Activated naive CD4-positive, alpha-beta T cell treated with anti-CD3 and anti-CD28 coated beads for 36 hours (primary cell): ENCODE measurements at regions of chr1 and their contacts with region 1.

Region 1: GRCh38 chr1:89632657-89633247 is at the start of gene LRRC8C:
- DNase-seq: peak; percentile 86
- H3K4me3 Mint-ChIP-seq: peak within 1 kb of the TSS; percentile 91
- H3K27ac Mint-ChIP-seq: peak within 1 kb of the TSS; percentile 93
- H3K4me1 Mint-ChIP-seq: peaks cover 65% of the 10 kb centered on the region
- H3K27me3 Mint-ChIP-seq: no peaks in the 10 kb centered on the region
- total RNA-seq, gene LRRC8C: 13.6 TPM

Region 2: DNA sequence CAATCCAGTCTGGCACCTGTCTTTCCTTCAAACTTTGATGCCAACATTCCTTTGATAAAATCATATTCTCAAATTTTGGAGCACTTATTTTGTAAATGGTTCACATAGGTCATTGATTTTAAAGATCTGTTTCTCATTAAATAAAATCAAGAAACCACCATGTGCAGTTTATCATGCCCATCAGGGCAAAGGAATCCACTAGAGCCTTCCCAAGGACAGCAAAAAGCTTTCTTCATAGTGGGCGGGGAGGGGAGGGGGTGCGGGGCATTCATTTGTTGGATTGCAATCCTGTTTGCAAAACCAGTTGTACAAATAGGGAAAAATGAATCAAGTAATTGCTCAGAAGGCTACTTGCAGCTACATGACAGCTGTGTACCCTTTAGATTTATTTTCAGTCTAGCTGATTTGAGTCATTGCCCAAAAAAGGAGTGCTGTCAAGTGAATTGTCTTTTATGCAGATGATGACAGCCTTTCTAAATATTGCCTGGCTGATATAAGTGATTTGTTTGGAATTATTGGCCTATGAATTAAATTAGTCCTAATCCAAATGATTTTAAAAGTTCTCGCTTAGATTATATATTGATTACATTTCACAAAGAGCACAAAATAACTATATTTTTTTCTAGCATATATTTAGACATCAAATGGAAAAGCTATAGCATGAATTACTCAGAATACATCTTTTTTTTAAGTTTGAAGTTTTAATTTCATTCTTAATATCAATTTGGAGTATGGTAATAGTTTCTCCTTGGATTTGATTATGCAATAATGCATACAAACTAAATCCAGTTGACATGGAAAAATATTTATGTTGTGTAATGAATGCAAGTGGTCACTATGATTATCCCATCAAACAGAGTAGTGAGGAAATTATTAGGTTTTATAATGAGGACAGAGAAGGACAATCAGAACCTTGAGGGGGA is 84.9 kb before region 1 on chr1:
- CTCF ChIA-PET with region 1: interaction called, 3 read pairs
- intact Hi-C with region 1: loop called (anchors 1 kb)
- DNase-seq: peak; percentile 56
- H3K4me3 Mint-ChIP-seq: no peak overlapping the region
- H3K27ac Mint-ChIP-seq: peak overlapping the region; percentile 95
- H3K4me1 Mint-ChIP-seq: peaks cover 84% of the 10 kb centered on the region
- H3K27me3 Mint-ChIP-seq: no peaks in the 10 kb centered on the region

Region 3: GRCh38 chr1:89649783-89650182 is 17.0 kb after region 1 on chr1:
- CTCF ChIA-PET with region 1: interaction called, 5 read pairs
- intact Hi-C with region 1: loop called (anchors 1 kb)
- DNase-seq: no peak
- H3K4me3 Mint-ChIP-seq: no peak overlapping the region
- H3K27ac Mint-ChIP-seq: peak overlapping the region; percentile 56
- H3K4me1 Mint-ChIP-seq: peaks cover 66% of the 10 kb centered on the region
- H3K27me3 Mint-ChIP-seq: no peaks in the 10 kb centered on the region

Region 4: GRCh38 chr1:89688607-89689006 is 55.9 kb after region 1 on chr1:
- CTCF ChIA-PET with region 1: no interaction called
- intact Hi-C with region 1: loop called (anchors 1 kb)
- DNase-seq: no peak
- H3K4me3 Mint-ChIP-seq: no peak overlapping the region
- H3K27ac Mint-ChIP-seq: peak overlapping the region; percentile 54
- H3K4me1 Mint-ChIP-seq: peaks cover 78% of the 10 kb centered on the region
- H3K27me3 Mint-ChIP-seq: no peaks in the 10 kb centered on the region

Region 5: GRCh38 chr1:89757532-89757931 is 124.8 kb after region 1 on chr1:
- CTCF ChIA-PET with region 1: interaction called, 112 read pairs
- intact Hi-C with region 1: loop called (anchors 1 kb)
- DNase-seq: peak; percentile 86
- H3K4me3 Mint-ChIP-seq: peak overlapping the region; percentile 67
- H3K27ac Mint-ChIP-seq: peak overlapping the region; percentile 70
- H3K4me1 Mint-ChIP-seq: peaks cover 72% of the 10 kb centered on the region
- H3K27me3 Mint-ChIP-seq: no peaks in the 10 kb centered on the region

Region 6: GRCh38 chr1:89843281-89844121 is 210.7 kb after region 1 on chr1:
- CTCF ChIA-PET with region 1: no interaction called
- intact Hi-C with region 1: loop called (anchors 5 kb)
- DNase-seq: peak; percentile 86
- H3K4me3 Mint-ChIP-seq: peak overlapping the region; percentile 91
- H3K27ac Mint-ChIP-seq: peak overlapping the region; percentile 94
- H3K4me1 Mint-ChIP-seq: peaks cover 47% of the 10 kb centered on the region
- H3K27me3 Mint-ChIP-seq: no peaks in the 10 kb centered on the region

Region 7: GRCh38 chr1:91555821-91556531 is 1923.2 kb after region 1 on chr1:
- CTCF ChIA-PET with region 1: no interaction called
- intact Hi-C with region 1: loop called (anchors 10 kb)
- DNase-seq: peak; percentile 84
- H3K4me3 Mint-ChIP-seq: peak overlapping the region; percentile 26
- H3K27ac Mint-ChIP-seq: peak overlapping the region; percentile 90
- H3K4me1 Mint-ChIP-seq: peaks cover 68% of the 10 kb centered on the region
- H3K27me3 Mint-ChIP-seq: no peaks in the 10 kb centered on the region